ENCODE measurements at regions of chrX and their contacts with region 1.

Region 1: GRCh38 chrX:132071260-132071659 is 48.2 kb downstream of the STK26 start:
- DNase-seq: no peak
- H3K4me3 ChIP-seq: no peak overlapping the region
- CTCF ChIP-seq: no peak

Region 2: GRCh38 chrX:131854581-131854980 is 216.7 kb before region 1 on chrX:
- CTCF ChIA-PET with region 1: interaction called, 16 read pairs
- POLR2A ChIA-PET with region 1: no interaction called
- DNase-seq: no peak
- H3K4me3 ChIP-seq: no peak overlapping the region
- CTCF ChIP-seq: no peak

Measured in AG04449 (cell line).